K562 (cell line): ENCODE measurements at regions of chr1 and their contacts with region 1.

Region 1: GRCh38 chr1:165717918-165718515 is 19.7 kb upstream of the ALDH9A1 start:
- DNase-seq: peak; percentile 42 to 77 (median 58)
- ATAC-seq: peak; percentile 91
- H3K4me3 ChIP-seq: no peak overlapping the region
- H3K27ac ChIP-seq: no peak overlapping the region
- H3K4me1 ChIP-seq: no peaks in the 10 kb centered on the region
- H3K27me3 ChIP-seq: no peaks in the 10 kb centered on the region; a peak in 2 of 5 replicates
- CTCF ChIP-seq: peak; percentile 83 to 97 (median 87)
- EP300 ChIP-seq: no peak
- POLR2A ChIP-seq: no peak
- RAD21 ChIP-seq: peak; percentile 97 to 99

Region 2: GRCh38 chr1:165392634-165393571 is 325.1 kb before region 1 on chr1:
- CTCF ChIA-PET with region 1: no interaction called
- POLR2A ChIA-PET with region 1: no interaction called
- in situ Hi-C with region 1: no loop called
- intact Hi-C with region 1: loop called (anchors 5 kb)
- DNase-seq: peak; percentile 90 to 98 (median 94)
- ATAC-seq: peak; percentile 100
- H3K4me3 ChIP-seq: no peak overlapping the region
- H3K27ac ChIP-seq: no peak overlapping the region
- H3K4me1 ChIP-seq: peaks cover 5 to 7% of the 10 kb centered on the region in 2 experiments; a peak in 3 of 5 replicates
- H3K27me3 ChIP-seq: peaks cover 0 to 4% of the 10 kb centered on the region in 2 experiments; a peak in 1 of 5 replicates
- CTCF ChIP-seq: peak; percentile 91 to 98 (median 96)
- EP300 ChIP-seq: 0 out of 2 replicates have a peak, but pooled peaks have one; percentile 39
- POLR2A ChIP-seq: no peak
- RAD21 ChIP-seq: peak; percentile 92 to 97

Region 3: GRCh38 chr1:165409657-165410358 is 308.2 kb before region 1 on chr1:
- CTCF ChIA-PET with region 1: no interaction called
- POLR2A ChIA-PET with region 1: no interaction called
- in situ Hi-C with region 1: loop called (anchors 10 kb)
- intact Hi-C with region 1: no loop called
- DNase-seq: no peak
- ATAC-seq: no peak
- H3K4me3 ChIP-seq: no peak overlapping the region
- H3K27ac ChIP-seq: no peak overlapping the region
- H3K4me1 ChIP-seq: no peaks in the 10 kb centered on the region
- H3K27me3 ChIP-seq: peaks cover 0 to 8% of the 10 kb centered on the region in 2 experiments; a peak in 1 of 5 replicates
- CTCF ChIP-seq: no peak
- EP300 ChIP-seq: no peak
- POLR2A ChIP-seq: no peak
- RAD21 ChIP-seq: no peak

Region 4: DNA sequence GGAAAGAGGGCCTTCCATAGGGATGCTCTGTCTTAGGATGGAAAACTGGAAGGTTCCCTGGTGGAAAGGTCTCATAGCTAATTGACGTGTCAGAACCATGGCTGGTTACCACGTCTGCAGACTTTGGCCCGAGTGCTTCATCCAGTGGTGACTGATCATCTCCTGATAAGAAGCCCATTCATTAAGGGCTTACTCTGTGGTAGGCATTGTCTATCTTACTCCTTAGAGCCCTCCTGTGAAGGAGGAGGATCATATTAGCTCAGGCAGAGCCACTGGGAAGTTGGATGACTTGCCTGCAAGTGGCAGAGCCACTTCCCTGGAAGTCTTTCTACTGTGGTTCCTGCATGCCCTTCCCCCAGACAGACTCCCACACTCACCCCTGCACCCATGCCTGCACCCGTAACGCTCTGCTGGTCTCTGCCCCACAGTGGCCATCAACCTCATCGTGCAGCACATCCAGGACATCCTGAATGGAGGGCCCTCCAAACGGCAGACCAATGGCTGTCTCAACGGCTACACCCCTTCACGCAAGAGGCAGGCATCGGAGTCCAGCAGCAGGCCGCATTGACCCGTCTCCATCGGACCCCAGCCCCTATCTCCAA is 189.3 kb after region 1 on chr1:
- CTCF ChIA-PET with region 1: interaction called, 51 read pairs
- POLR2A ChIA-PET with region 1: no interaction called
- in situ Hi-C with region 1: loop called (anchors 5 kb)
- intact Hi-C with region 1: no loop called
- DNase-seq: no peak
- ATAC-seq: no peak
- H3K4me3 ChIP-seq: no peak overlapping the region
- H3K27ac ChIP-seq: no peak overlapping the region
- H3K4me1 ChIP-seq: no peaks in the 10 kb centered on the region
- H3K27me3 ChIP-seq: no peaks in the 10 kb centered on the region
- CTCF ChIP-seq: no peak
- EP300 ChIP-seq: no peak
- POLR2A ChIP-seq: no peak
- RAD21 ChIP-seq: no peak